CD8-positive, alpha-beta T cell (primary cell): ENCODE measurements at regions of chr6 and their contacts with region 1.

Region 1: DNA sequence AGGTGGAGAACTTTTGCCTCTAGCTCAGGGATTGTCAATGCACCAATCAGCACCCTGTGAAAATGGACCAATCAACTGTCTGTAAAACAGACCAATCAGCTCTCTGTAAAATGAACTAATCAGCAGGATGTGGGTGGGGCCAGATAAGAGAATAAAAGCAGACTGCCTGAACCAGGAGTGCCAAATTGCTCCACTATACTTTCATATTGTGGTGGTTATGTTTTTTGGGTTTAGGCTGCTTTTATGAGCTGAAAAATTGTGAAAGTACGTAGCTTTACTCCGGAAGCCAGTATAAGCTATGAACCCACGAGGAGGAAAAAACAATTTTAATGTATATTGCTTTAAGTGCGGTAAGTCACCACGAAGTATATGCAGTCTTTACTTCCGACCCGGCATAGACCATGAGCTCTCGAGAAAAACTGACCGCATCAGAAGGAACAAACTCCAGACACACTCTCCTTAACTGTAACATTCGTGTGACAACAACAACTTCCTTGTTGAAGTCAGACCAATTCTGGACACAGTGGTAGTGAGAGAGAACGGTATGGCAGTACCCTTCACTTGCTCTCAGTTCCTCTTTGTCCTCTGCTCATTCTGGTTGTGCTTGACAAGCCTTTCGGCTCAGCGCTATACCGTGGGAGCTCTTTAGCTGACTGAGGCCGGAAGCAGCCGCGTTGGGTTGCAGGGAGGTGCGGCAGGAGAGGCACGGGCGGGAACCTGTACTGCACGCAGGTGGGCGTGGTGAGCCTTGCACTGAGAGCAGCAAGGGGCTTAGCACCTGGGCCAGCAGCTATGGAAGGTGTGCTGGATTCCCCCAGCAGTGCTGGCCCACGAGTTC is 81.9 kb upstream of the E2F3 start:
- DNase-seq: peak; percentile 57 to 92 (median 76)
- ATAC-seq: peak; percentile 91
- H3K4me3 ChIP-seq: peak overlapping the region; percentile 46 to 61
- H3K4me3 Mint-ChIP-seq: peak overlapping the region; percentile 93
- H3K27ac ChIP-seq: peak overlapping the region; percentile 78 to 87
- H3K27ac Mint-ChIP-seq: peak overlapping the region; percentile 99
- H3K4me1 ChIP-seq: peaks cover 12% of the 10 kb centered on the region
- H3K4me1 Mint-ChIP-seq: peaks cover 21% of the 10 kb centered on the region
- H3K27me3 ChIP-seq: no peaks in the 10 kb centered on the region
- H3K27me3 Mint-ChIP-seq: no peaks in the 10 kb centered on the region
- CTCF ChIP-seq: no peak

Region 2: DNA sequence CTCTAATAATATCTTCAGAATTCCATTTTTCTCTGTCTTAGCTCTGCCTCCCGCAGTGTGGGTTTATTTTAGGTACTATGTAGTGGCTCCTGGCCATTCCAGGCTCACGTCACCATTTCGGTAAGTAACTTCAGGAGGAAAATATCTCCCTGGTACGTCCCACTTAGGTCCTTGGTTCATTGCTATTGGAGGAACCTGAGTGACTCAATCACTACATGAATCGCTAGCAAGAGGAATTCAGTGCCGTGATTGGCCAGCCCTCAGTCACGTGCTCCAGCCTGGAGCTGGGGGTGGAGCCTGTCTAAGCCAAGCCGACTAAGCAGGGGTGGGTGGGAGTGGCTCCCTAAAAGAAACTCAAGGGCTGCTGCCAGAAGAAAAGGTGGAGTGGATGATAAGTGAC is 14.6 kb after region 1 on chr6:
- CTCF ChIA-PET with region 1: interaction called, 3 read pairs
- POLR2A ChIA-PET with region 1: interaction called, 57 read pairs
- intact Hi-C with region 1: no loop called
- DNase-seq: no peak
- ATAC-seq: no peak
- H3K4me3 ChIP-seq: no peak overlapping the region
- H3K4me3 Mint-ChIP-seq: no peak overlapping the region
- H3K27ac ChIP-seq: no peak overlapping the region
- H3K27ac Mint-ChIP-seq: no peak overlapping the region
- H3K4me1 ChIP-seq: peaks cover 19% of the 10 kb centered on the region
- H3K4me1 Mint-ChIP-seq: peaks cover 24% of the 10 kb centered on the region
- H3K27me3 ChIP-seq: no peaks in the 10 kb centered on the region
- H3K27me3 Mint-ChIP-seq: no peaks in the 10 kb centered on the region
- CTCF ChIP-seq: no peak

Region 3: DNA sequence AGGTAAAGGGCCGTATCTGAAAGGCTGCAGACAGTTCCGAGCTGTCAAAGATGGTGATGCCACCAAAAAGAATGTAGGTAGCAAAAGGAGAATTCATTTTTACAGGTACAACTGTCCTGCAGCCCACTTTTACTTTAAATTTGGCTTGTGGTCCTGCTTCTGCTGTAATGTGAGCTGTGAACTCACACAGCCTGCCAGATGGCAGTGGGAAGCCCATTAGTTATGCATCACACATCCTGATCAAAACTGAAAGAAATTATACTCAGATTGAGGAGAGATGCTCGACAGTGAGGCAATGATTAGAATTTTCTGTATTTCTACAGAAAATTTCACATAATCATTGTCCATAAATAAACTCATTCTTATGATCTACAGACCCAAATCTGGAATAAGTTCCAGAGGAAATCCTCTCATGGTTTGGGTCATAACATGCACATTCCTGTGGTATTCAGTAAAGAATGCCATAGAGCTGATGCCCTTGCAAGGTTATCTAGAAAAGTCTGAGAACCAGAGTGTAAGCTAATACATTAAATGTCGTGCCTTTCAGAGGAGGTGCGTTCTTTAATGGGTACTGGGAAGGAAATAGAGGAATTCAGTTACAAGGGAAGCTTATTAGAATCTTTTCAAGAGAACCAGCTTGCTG is 58.0 kb after region 1 on chr6:
- CTCF ChIA-PET with region 1: interaction called, 5 read pairs
- POLR2A ChIA-PET with region 1: interaction called, 20 read pairs
- intact Hi-C with region 1: no loop called
- DNase-seq: no peak
- ATAC-seq: no peak
- H3K4me3 ChIP-seq: no peak overlapping the region
- H3K4me3 Mint-ChIP-seq: no peak overlapping the region
- H3K27ac ChIP-seq: no peak overlapping the region
- H3K27ac Mint-ChIP-seq: no peak overlapping the region
- H3K4me1 ChIP-seq: peaks cover 4% of the 10 kb centered on the region
- H3K4me1 Mint-ChIP-seq: peaks cover 23% of the 10 kb centered on the region
- H3K27me3 ChIP-seq: no peaks in the 10 kb centered on the region
- H3K27me3 Mint-ChIP-seq: no peaks in the 10 kb centered on the region
- CTCF ChIP-seq: no peak

Region 4: GRCh38 chr6:20534295-20535262 is 214.8 kb after region 1 on chr6 and contains the start of gene CDKAL1:
- CTCF ChIA-PET with region 1: interaction called, 7 read pairs
- POLR2A ChIA-PET with region 1: interaction called, 8 read pairs
- intact Hi-C with region 1: loop called (anchors 1 kb)
- DNase-seq: peak; percentile 73 to 94 (median 89)
- ATAC-seq: peak; percentile 88
- H3K4me3 ChIP-seq: peak within 1 kb of the TSS; percentile 65 to 74
- H3K4me3 Mint-ChIP-seq: peak within 1 kb of the TSS; percentile 97
- H3K27ac ChIP-seq: peak within 1 kb of the TSS; percentile 71 to 88
- H3K27ac Mint-ChIP-seq: peak within 1 kb of the TSS; percentile 99
- H3K4me1 ChIP-seq: peaks cover 13% of the 10 kb centered on the region
- H3K4me1 Mint-ChIP-seq: peaks cover 46% of the 10 kb centered on the region
- H3K27me3 ChIP-seq: no peaks in the 10 kb centered on the region
- H3K27me3 Mint-ChIP-seq: peaks cover 2% of the 10 kb centered on the region
- CTCF ChIP-seq: no peak
- total RNA-seq, gene CDKAL1: 21.2 to 22.4 TPM

Region 5: GRCh38 chr6:20589266-20589665 is 269.5 kb after region 1 on chr6:
- CTCF ChIA-PET with region 1: no interaction called
- POLR2A ChIA-PET with region 1: no interaction called
- intact Hi-C with region 1: no loop called
- DNase-seq: no peak
- ATAC-seq: no peak
- H3K4me3 ChIP-seq: no peak overlapping the region
- H3K4me3 Mint-ChIP-seq: no peak overlapping the region
- H3K27ac ChIP-seq: no peak overlapping the region
- H3K27ac Mint-ChIP-seq: no peak overlapping the region
- H3K4me1 ChIP-seq: no peaks in the 10 kb centered on the region
- H3K4me1 Mint-ChIP-seq: peaks cover 21% of the 10 kb centered on the region
- H3K27me3 ChIP-seq: no peaks in the 10 kb centered on the region
- H3K27me3 Mint-ChIP-seq: no peaks in the 10 kb centered on the region
- CTCF ChIP-seq: no peak